Calu3 (cell line): ENCODE measurements at regions of chr10 and their contacts with region 1.

Region 1: DNA sequence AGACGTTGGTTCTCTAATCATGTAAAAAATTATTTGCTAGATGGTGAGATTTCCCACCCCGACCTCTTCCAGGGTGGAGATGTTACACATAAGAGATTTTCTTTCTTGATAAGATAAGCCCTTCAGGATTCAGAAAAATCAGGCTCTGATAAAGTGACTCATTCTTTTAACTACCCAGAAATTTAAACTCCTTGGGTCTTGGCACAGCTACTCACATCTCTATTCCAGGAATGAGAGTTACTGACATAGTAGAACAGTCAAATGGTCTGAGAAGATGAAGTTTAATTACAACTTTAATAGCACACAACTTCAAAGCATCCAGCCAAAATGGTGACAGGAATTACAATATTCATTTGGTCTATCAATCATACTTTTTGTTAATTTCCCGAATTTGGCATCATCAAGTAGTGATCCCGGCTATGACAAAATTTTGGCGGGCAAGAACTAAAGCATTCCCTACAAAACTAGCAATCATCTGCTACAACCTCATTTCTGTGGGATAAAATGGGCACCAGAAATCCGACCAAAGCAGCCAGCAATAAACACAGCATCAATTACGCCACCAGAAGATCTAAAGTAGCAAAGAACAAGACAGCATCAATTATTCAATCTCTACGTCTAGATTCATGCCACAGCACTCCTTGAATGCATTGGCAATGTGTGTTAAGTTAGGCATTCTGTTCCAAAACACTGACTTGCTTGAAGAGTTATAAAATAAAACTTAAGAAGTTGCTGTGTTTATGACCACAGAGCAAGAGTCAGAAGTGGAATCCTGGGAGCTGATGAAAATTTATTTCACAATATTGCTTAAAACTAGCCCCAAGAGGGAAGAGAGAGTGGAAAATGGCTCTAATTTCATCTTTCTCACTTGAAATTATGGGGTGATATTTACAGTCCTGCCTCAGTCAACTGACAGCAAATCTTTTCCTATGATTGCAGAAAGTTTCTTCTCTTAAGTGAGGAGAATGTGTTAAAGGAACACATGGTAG is 565.7 kb upstream of the ANKRD30A start:
- DNase-seq: no peak
- H3K4me3 Mint-ChIP-seq: no peak overlapping the region
- H3K27ac Mint-ChIP-seq: no peak overlapping the region
- H3K4me1 Mint-ChIP-seq: no peaks in the 10 kb centered on the region
- H3K27me3 Mint-ChIP-seq: no peaks in the 10 kb centered on the region
- CTCF ChIP-seq: no peak

Region 2: DNA sequence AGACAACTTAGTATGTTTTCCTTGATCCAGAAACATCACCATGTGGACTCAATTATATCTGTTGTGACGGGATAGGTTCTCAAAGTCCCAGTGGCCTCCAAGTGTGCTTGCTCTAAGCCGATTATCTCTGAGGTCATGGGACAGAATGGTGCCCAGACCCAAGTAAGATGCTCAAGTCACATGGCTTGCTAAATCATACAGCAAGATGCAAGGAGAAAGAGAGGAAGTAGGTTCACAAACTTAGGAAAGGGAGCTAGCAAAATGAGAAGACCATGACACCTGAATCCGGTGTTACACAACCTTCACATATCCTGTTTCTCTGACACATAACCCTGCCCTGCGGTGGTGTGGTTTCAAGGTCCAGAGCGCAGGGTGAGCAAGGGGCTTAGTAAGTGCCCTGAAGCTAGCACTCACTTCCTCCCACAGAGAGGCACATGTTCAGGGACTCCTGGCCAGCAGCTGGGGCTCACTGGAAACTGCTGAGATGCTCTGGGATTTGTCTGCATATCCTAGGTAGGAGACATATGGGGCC is 25.2 kb before region 1 on chr10:
- CTCF ChIA-PET with region 1: no interaction called
- intact Hi-C with region 1: loop called (anchors 1 kb)
- DNase-seq: no peak
- H3K4me3 Mint-ChIP-seq: no peak overlapping the region
- H3K27ac Mint-ChIP-seq: no peak overlapping the region
- H3K4me1 Mint-ChIP-seq: no peaks in the 10 kb centered on the region
- H3K27me3 Mint-ChIP-seq: no peaks in the 10 kb centered on the region
- CTCF ChIP-seq: no peak

Region 3: GRCh38 chr10:36602374-36602773 is 42.7 kb after region 1 on chr10:
- CTCF ChIA-PET with region 1: no interaction called
- intact Hi-C with region 1: no loop called
- DNase-seq: no peak
- H3K4me3 Mint-ChIP-seq: no peak overlapping the region
- H3K27ac Mint-ChIP-seq: no peak overlapping the region
- H3K4me1 Mint-ChIP-seq: no peaks in the 10 kb centered on the region
- H3K27me3 Mint-ChIP-seq: no peaks in the 10 kb centered on the region
- CTCF ChIP-seq: no peak

Region 4: DNA sequence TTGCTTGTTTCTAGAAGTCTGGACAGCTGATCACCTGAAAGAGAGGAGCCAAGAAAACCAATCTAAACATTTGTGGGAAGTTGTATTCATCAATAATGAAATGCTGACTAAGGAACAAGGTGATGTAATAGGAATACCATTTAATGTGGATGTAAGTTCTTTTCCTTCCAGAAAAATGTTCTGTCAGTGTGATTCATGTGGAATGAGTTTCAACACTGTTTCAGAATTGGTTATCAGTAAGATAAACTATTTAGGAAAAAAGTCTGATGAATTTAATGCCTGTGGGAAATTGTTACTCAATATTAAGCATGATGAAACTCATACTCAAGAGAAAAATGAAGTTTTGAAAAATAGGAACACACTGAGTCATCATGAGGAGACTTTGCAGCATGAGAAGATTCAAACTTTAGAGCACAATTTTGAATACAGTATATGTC is 1494.7 kb after region 1 on chr10:
- CTCF ChIA-PET with region 1: no interaction called
- intact Hi-C with region 1: no loop called
- DNase-seq: no peak
- H3K4me3 Mint-ChIP-seq: no peak overlapping the region
- H3K27ac Mint-ChIP-seq: peak overlapping the region; percentile 34
- H3K4me1 Mint-ChIP-seq: no peaks in the 10 kb centered on the region
- H3K27me3 Mint-ChIP-seq: no peaks in the 10 kb centered on the region
- CTCF ChIP-seq: no peak